HEK293T (cell line): ENCODE measurements at regions of chr19 and their contacts with region 1.

Region 1: DNA sequence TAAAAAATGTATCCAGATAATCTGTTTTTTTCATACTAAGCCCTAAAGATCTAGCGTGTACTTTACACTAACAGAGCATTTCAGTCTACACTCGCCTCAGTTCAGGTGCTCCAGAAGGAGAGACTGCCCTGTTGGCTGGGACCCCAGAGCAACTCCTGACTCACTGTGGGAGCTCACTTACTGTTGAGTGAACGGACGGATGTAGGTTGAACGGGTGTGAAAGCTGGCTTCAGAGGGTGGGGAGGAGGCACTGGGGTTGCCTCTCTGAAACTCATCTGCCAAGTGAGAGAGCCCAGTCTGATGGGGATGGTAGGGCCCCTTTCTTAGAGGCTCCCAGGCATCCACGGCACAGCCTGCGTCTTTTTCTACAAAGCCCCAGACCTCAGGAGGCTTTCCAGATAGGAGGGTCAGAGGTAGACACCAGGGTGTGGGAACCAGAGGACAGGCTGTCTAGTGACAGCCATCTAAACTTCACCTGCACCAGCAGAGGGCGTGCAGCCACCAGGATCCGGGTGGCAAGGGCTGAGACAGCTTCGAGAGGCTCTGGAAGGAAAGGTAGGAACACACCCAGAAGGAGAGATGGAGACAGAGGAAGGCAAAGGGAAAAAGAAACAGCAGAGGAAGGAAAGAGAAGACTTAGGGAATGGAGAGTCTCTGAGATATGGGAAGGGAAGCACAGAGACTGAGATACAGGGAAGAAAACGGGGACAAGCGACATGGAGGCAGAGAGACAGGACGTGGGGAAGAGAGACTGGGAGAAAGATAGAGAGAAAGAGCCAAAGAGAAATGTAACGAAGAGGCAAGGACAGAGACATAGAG is 3.7 kb downstream of the KASH5 start:
- DNase-seq: peak; percentile 85

Region 2: DNA sequence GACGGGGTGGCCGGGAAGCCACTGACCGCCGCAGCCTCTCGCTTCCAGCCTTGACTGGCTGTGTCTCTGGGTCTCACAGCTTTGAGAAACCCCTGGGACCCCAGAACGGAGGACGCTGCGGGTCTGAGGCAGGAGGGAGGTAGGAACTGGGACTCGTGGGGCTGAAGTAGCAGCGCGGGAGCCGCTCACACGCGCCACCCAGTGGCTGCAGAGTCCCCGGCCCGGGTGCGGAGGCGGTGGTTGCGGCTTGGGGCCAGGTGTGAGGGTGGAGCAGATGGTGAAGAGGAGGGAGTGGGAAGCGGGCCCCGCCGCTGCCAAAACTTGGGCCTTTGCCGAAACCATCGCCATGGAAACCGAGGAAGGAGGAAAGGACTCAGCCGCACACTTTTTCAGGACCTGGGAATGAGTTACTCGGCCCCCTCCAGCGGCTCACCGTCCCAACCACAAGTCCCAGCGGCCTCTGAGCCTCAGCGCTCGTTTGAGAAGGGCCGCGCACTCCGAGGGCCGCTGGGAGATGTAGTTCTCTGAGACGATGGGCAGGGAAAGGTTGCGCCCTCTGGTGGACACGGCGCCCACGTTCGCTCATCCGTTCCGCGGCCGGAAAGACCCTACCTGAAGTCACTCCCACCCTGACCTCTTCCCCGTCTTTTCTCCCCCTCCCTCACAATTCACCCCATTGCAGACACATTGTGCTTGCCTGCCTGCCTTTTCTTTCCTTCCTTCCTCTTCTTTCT is 51.7 kb after region 1 on chr19:
- CTCF ChIA-PET with region 1: interaction called, 11 read pairs
- POLR2A ChIA-PET with region 1: interaction called, 3 read pairs
- DNase-seq: peak; percentile 82